PC-9 (cell line): ENCODE measurements at regions of chr9 and their contacts with region 1.

Region 1: DNA sequence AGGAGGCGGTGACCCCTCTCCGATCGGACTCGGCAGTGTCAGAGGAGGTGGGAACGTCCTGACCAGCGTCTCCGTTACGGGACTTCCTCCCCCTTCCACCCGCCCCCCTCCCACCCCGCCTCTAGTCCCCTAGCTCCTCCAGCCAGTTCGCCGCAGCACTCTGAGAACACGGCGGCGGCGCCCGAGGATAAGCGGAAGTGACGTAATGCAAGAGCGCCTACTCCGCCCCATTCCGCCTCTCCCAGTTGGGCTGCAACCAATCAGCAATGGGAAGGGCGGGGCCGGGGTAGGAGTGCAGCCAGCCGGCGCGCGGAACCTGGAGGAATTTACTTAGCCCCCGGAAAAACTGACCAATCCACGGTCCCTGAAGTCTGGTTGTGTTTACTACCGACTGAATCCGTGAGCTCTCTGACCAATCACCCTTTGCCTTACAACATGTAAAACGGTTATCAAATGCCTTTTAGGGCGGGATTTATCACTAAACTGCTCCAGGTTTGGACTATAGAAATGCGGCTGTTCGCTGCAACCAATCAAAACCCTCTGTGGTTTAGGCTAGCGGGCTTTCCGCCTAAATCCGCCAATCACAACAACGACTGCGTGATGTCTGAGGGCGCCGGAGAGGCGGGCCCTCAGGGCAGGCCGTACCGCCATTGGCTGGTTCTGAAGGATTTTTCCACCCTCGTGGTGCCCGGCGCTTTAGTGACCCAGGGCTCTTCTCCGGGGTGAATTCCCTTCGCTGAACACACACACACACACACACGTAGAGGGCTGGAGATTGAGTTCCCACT is at the start of gene ZBTB5:
- DNase-seq: peak; percentile 95 to 96
- H3K4me3 ChIP-seq: peak within 1 kb of the TSS; percentile 92
- H3K27ac ChIP-seq: peak within 1 kb of the TSS; percentile 81
- H3K4me1 ChIP-seq: peaks cover 21% of the 10 kb centered on the region
- H3K27me3 ChIP-seq: no peaks in the 10 kb centered on the region
- CTCF ChIP-seq: no peak
- total RNA-seq, gene ZBTB5: 7.7 and 8.8 TPM in 2 replicates

Region 2: DNA sequence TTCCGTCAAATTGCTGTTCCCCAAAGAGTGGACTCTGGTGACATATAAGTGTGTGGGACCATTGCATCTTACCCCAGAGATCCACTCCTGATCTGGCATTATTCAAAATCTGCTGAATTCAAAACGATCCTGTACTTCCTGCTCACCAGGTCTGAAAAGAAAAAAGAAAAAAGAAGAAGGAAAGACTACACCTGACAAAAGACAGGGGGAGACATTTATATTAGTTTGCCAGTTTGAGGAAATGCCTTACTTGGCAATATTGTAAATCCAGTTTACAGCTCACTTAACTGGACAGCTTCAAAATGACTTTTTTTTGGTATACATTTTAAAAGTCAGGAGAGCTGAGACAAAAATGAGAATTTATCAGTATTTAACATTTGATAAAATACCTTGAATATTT is 58.0 kb before region 1 on chr9:
- CTCF ChIA-PET with region 1: interaction called, 3 read pairs
- POLR2A ChIA-PET with region 1: interaction called, 12 read pairs
- intact Hi-C with region 1: loop called (anchors 2 kb)
- DNase-seq: no peak
- H3K4me3 ChIP-seq: no peak overlapping the region
- H3K27ac ChIP-seq: no peak overlapping the region
- H3K4me1 ChIP-seq: peaks cover 67% of the 10 kb centered on the region
- H3K27me3 ChIP-seq: no peaks in the 10 kb centered on the region
- CTCF ChIP-seq: peak; percentile 37; the same call in 1 of the 2 replicates

Region 3: GRCh38 chr9:37412431-37413151 is 52.9 kb before region 1 on chr9:
- CTCF ChIA-PET with region 1: interaction called, 3 read pairs
- POLR2A ChIA-PET with region 1: interaction called, 12 read pairs
- intact Hi-C with region 1: loop called (anchors 2 kb)
- DNase-seq: peak; percentile 87 to 93
- H3K4me3 ChIP-seq: peak overlapping the region; percentile 21; the same call in 1 of the 2 replicates
- H3K27ac ChIP-seq: peak overlapping the region; percentile 85
- H3K4me1 ChIP-seq: peaks cover 50% of the 10 kb centered on the region
- H3K27me3 ChIP-seq: no peaks in the 10 kb centered on the region
- CTCF ChIP-seq: no peak

Region 4: GRCh38 chr9:37422289-37423104 is 42.9 kb before region 1 on chr9 and contains the start of gene GRHPR:
- CTCF ChIA-PET with region 1: no interaction called
- POLR2A ChIA-PET with region 1: interaction called, 7 read pairs
- intact Hi-C with region 1: loop called (anchors 2 kb)
- DNase-seq: peak; percentile 48 to 76
- H3K4me3 ChIP-seq: peak within 1 kb of the TSS; percentile 63
- H3K27ac ChIP-seq: peak within 1 kb of the TSS; percentile 50
- H3K4me1 ChIP-seq: peaks cover 21% of the 10 kb centered on the region; the same call in 1 of the 2 replicates
- H3K27me3 ChIP-seq: no peaks in the 10 kb centered on the region
- CTCF ChIP-seq: no peak
- total RNA-seq, gene GRHPR: 77.2 and 85.4 TPM in 2 replicates

Region 5: DNA sequence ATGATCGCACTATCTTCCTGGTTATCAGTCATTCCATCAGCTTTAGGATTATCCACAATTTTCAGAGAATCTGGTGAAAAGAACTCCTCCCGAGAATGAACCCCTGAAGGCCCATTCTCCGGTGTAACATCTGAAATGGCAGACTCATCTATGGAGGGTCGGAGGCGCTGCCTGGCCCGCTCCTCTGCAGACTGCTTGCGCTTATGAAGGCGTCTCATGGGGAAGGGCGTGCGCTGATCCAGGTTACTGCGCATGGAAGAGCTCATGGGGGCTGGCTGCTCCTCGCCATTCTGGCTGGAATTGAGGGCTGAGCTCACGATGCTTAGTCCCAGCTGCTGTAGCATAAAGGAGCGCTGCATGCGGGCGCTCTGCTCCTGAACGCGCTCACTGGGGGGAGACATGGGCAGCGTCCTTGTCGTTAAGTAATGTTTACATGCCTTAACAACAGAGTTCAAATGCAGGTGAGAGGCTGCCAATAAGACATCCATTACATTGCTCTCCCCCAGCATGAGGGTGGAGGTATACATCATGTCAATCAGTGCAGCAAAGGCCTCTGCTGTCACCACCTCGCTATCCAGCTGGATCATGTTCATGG is 23.6 kb before region 1 on chr9:
- CTCF ChIA-PET with region 1: no interaction called
- POLR2A ChIA-PET with region 1: interaction called, 24 read pairs
- intact Hi-C with region 1: no loop called
- DNase-seq: no peak
- H3K4me3 ChIP-seq: no peak overlapping the region
- H3K27ac ChIP-seq: no peak overlapping the region
- H3K4me1 ChIP-seq: no peaks in the 10 kb centered on the region
- H3K27me3 ChIP-seq: no peaks in the 10 kb centered on the region
- CTCF ChIP-seq: no peak

Region 6: GRCh38 chr9:37511016-37512010 is 45.9 kb after region 1 on chr9:
- CTCF ChIA-PET with region 1: no interaction called
- POLR2A ChIA-PET with region 1: no interaction called
- intact Hi-C with region 1: no loop called
- DNase-seq: no peak
- H3K4me3 ChIP-seq: no peak overlapping the region
- H3K27ac ChIP-seq: no peak overlapping the region
- H3K4me1 ChIP-seq: no peaks in the 10 kb centered on the region
- H3K27me3 ChIP-seq: no peaks in the 10 kb centered on the region
- CTCF ChIP-seq: no peak

Region 7: DNA sequence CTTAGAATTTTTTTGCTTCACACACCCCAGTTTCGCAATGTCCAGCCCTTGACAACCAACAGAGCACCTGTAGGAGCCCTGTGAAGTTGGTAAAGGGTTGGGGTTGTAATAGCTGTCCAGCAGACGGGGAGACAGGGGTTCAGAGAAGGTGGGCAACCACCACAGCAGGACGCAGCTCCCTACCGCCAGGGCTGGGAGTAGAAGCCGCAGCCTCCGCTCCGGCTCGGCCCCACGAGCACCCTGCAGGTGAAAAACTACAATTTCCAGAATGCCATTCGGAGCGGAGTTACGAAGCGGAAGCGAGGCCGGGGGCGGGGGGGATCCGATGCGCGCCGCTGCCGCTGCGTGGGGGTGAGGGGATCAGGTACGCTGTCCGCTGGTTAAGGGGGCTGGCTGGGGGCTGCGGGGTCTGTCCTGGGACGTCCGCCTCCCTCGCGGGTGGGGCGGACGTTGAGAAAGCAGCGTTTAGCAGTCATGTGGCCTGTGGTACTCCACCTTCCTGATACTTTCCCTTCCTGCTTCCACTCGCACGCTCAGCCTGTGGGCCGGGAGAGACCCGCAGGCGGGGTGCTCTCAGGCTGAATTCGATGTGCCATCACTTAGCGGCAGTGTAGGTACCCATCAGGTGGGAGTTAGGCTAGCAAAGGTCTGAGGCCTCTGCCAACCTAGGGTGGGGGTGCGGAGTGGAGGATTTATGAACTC is 288.2 kb after region 1 on chr9 and contains the start of gene TRMT10B:
- CTCF ChIA-PET with region 1: no interaction called
- POLR2A ChIA-PET with region 1: interaction called, 17 read pairs
- intact Hi-C with region 1: no loop called
- DNase-seq: peak; percentile 45 to 49
- H3K4me3 ChIP-seq: peak within 1 kb of the TSS; percentile 96
- H3K27ac ChIP-seq: no peak within 1 kb of the TSS
- H3K4me1 ChIP-seq: 0 out of 2 replicates have a peak, but pooled peaks cover 6% of the 10 kb centered on the region
- H3K27me3 ChIP-seq: no peaks in the 10 kb centered on the region
- CTCF ChIP-seq: no peak
- total RNA-seq, gene TRMT10B: 5.2 and 8.8 TPM in 2 replicates